ENCODE measurements at regions of chr13 and their contacts with region 1.

Region 1: GRCh38 chr13:101775267-101775666 is 322.8 kb downstream of the ITGBL1 start:
- DNase-seq: no peak
- ATAC-seq: no peak
- H3K4me3 ChIP-seq: no peak overlapping the region
- H3K27ac ChIP-seq: no peak overlapping the region
- H3K4me1 ChIP-seq: no peaks in the 10 kb centered on the region
- H3K27me3 ChIP-seq: no peaks in the 10 kb centered on the region
- CTCF ChIP-seq: no peak

Region 2: GRCh38 chr13:101258071-101258470 is 517.2 kb before region 1 on chr13:
- intact Hi-C with region 1: loop called in 1 of 10 experiments (anchors 5 kb)
- DNase-seq: no peak
- ATAC-seq: no peak
- H3K4me3 ChIP-seq: no peak overlapping the region
- H3K27ac ChIP-seq: no peak overlapping the region
- H3K4me1 ChIP-seq: peaks cover 0 to 3% (median 0%) of the 10 kb centered on the region in 9 donors
- H3K27me3 ChIP-seq: no peaks in the 10 kb centered on the region
- CTCF ChIP-seq: no peak

Region 3: DNA sequence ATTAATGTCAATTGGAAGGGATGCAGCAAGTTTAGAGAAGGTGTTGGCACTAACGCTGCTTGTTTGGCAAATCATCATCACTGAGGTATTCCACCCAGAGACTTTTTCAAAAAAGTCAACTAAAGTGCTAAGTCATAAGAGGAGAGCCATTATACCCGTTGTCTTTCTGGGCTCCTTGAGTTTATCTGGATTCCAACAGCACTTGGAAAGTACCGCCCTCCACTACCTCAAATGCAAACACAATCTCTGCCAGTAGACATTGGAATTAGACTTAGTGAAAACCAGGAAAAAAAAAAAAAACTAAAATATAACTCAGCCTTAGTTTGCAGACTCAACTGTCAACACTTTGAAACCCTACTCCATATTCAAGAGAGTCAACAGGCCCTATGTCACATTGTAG is 56.8 kb before region 1 on chr13:
- intact Hi-C with region 1: no loop called
- DNase-seq: no peak
- ATAC-seq: no peak
- H3K4me3 ChIP-seq: no peak overlapping the region
- H3K27ac ChIP-seq: no peak overlapping the region
- H3K4me1 ChIP-seq: no peaks in the 10 kb centered on the region
- H3K27me3 ChIP-seq: no peaks in the 10 kb centered on the region
- CTCF ChIP-seq: no peak

Measured in heart right ventricle (tissue), 16 donors.